Activated T-helper 1 cell treated with anti-CD3 and anti-CD28 coated beads, Interleukin-12 subunit alpha, Interleukin-12 subunit beta, Interleukin-2, Interleukin-4 antibody, amounts not matched to agents 30 ng/mL and 10 ng/mL and 1 ng/mL, durations not matched to agents 14 hours and 24 hours and 36 hours (primary cell): ENCODE measurements at regions of chr2 and their contacts with region 1.

Region 1: DNA sequence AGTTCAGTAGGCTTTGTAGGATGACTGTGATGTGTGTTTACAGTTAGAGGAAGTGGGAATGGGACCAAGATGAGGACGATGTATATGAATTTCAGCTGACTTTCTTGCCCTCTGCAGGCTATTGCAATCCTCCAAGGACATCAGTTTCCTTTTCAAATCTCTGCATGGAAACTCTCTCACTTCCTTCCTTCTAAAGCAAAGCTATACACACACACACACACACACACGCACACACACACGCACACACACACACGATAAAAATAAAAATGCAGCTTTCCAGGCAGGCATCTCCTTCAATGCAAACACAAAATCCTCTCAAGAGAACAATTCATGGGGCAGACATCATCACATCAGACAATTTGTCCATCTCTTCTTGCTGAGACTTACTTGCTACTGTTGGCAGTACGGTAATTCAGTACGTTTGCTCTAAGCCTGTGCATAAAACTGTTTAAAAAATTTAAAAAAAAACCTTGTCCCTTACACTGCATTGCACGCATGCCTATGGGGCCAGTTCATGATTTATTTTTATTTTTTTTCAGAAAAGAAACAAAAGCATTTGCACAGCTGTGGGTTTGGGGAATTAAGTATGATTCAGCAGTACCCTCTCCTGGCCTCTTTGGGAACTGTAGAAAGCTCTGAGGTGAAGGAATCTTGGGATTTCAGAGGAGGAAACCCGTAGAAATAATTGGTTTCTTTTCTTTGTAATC is 27.1 kb upstream of the ICOS start:
- DNase-seq: no peak
- H3K4me3 Mint-ChIP-seq: peak overlapping the region; percentile 41
- H3K27ac Mint-ChIP-seq: peak overlapping the region; percentile 62
- H3K4me1 Mint-ChIP-seq: peaks cover 25% of the 10 kb centered on the region
- H3K27me3 Mint-ChIP-seq: peaks cover 2% of the 10 kb centered on the region

Region 2: DNA sequence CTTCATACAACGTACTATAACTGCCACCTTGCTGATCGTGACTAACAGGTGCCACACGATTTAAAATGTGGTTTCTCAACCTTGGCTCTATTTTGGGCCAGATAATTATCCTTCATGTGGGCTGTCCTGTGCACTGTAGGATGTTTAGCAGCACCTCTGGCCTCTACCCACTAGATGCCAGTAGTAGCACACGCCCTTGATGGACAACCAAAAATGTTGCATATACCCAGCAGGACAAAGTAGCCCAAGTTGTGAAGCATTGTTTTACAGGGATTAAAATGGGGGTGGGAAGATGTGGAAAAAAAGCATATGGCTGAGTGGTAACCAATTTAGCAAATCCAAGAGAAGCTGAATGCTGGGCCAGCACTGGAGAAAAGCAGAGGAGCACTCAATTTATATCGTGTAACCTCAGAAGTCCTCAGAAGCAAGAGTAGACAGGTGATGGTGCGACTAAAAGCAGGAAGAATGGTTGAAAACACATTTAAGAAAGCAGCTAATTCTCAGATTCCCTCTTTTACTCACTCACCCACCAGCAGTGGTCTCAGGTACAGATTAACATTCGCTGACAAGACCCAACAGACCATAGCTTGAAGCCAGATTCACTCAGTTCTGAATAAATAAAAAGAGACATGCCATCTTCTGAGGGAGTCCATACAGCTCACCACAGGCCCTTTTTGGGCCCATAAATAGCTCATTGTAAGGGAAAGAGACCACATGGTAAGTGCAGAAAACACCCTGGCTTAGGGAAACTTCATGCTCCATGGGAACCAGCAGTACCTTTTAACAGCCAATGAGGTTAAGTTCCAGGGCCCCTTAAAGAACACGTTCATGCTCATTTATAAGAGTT is 424.9 kb before region 1 on chr2:
- intact Hi-C with region 1: loop called (anchors 1 kb)
- DNase-seq: peak; percentile 30
- H3K4me3 Mint-ChIP-seq: no peak overlapping the region
- H3K27ac Mint-ChIP-seq: no peak overlapping the region
- H3K4me1 Mint-ChIP-seq: peaks cover 6% of the 10 kb centered on the region
- H3K27me3 Mint-ChIP-seq: no peaks in the 10 kb centered on the region

Region 3: DNA sequence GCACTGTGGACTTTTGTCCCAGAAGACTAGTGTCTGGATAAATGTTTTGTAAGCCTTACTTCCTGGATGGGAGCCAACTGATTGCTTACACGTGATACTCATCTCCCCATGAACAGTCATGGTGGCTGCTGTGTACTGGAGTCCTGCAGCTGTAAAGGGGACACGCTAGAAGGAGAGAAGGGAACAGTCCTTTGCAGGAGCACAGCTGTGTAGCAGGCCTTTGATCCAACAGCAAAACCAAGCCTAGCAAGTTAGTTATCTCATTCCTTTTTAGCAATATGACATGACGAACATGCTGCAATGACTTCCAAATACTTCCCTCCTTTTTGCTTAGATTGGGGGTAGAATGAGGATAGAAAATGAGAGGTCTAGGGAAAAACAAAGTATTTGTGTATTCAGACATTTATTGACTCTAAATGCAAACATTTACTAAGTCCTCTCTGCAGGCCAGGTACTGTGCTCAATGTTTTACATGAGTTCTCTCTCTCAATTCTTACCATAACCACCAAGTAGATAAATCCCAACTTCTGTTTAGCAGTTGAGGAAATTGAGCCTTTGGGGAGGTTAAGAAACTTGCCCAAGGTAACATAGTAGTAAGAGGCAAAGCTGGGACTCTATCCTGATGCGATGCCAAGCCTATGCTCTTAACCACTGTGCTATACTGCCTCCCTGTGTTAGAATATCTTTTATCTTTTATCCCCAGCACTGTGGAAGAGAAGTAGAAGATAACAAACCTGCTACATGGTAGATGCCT is 258.4 kb before region 1 on chr2:
- intact Hi-C with region 1: loop called (anchors 5 kb)
- DNase-seq: no peak
- H3K4me3 Mint-ChIP-seq: no peak overlapping the region
- H3K27ac Mint-ChIP-seq: no peak overlapping the region
- H3K4me1 Mint-ChIP-seq: peaks cover 36% of the 10 kb centered on the region
- H3K27me3 Mint-ChIP-seq: peaks cover 5% of the 10 kb centered on the region

Region 4: GRCh38 chr2:203782262-203782976 is 127.0 kb before region 1 on chr2:
- intact Hi-C with region 1: loop called (anchors 1 kb)
- DNase-seq: peak; percentile 50
- H3K4me3 Mint-ChIP-seq: no peak overlapping the region
- H3K27ac Mint-ChIP-seq: peak overlapping the region; percentile 92
- H3K4me1 Mint-ChIP-seq: peaks cover 63% of the 10 kb centered on the region
- H3K27me3 Mint-ChIP-seq: no peaks in the 10 kb centered on the region

Region 5: DNA sequence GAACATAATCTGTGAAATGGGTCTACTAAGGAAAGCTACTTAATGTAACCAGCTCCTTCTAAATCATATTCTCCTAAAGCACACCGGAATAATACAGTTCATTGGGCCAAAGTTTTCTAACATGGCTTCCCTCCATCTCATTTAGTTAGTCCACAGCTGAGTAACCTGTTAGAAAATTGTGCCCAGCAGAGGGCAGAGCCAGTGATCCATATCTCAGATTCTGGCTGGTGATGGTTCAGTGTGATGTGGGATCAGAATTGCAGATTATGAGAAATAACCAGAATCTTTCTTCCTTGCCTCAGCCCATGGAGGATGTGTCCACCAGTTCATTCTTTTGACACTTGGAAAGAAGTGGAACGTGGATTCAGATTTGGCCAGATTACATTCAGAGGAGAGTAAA is 51.2 kb before region 1 on chr2:
- intact Hi-C with region 1: loop called (anchors 1 kb)
- DNase-seq: no peak
- H3K4me3 Mint-ChIP-seq: no peak overlapping the region
- H3K27ac Mint-ChIP-seq: no peak overlapping the region
- H3K4me1 Mint-ChIP-seq: peaks cover 76% of the 10 kb centered on the region
- H3K27me3 Mint-ChIP-seq: no peaks in the 10 kb centered on the region